CD4-positive, alpha-beta memory T cell (primary cell): ENCODE measurements at regions of chr2 and their contacts with region 1.

Region 1: GRCh38 chr2:147082850-147083522 is 761.8 kb upstream of the ACVR2A start:
- DNase-seq: peak; percentile 50 to 64 (median 57)
- H3K4me3 ChIP-seq: no peak overlapping the region
- H3K4me3 Mint-ChIP-seq: no peak overlapping the region
- H3K27ac ChIP-seq: no peak overlapping the region
- H3K27ac Mint-ChIP-seq: no peak overlapping the region
- H3K4me1 ChIP-seq: no peaks in the 10 kb centered on the region
- H3K4me1 Mint-ChIP-seq: peaks cover 0 to 4% (median under 1%) of the 10 kb centered on the region in 4 donors
- H3K27me3 ChIP-seq: no peaks in the 10 kb centered on the region
- H3K27me3 Mint-ChIP-seq: no peaks in the 10 kb centered on the region

Region 2: DNA sequence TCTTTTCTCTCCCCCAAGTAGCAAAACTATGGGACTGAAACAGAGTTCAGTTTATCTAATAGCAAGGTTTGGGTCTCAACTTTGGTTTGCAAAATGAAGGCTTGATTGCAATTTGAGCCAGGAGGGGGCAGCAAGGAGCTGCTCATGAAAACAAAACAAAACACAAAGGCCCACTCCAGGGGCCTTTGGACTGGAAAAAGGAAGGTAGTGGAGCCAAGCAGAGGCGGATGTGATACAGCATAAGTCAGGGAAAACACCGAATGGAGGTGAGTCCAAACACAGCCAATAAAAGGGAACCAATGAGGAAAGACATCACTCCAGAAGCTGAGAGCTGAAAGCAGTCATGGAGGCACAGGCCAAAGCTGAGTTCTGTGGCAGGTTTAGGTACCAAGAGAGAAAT is 37.9 kb before region 1 on chr2:
- CTCF ChIA-PET with region 1: interaction called, 10 read pairs
- POLR2A ChIA-PET with region 1: no interaction called
- intact Hi-C with region 1: no loop called
- DNase-seq: peak; percentile 8 to 37 (median 33)
- H3K4me3 ChIP-seq: no peak overlapping the region
- H3K4me3 Mint-ChIP-seq: no peak overlapping the region
- H3K27ac ChIP-seq: no peak overlapping the region
- H3K27ac Mint-ChIP-seq: peak overlapping the region in 3 of 7 donors; percentile 4 to 85 (median 74)
- H3K4me1 ChIP-seq: no peaks in the 10 kb centered on the region
- H3K4me1 Mint-ChIP-seq: peaks cover 0 to 5% (median under 1%) of the 10 kb centered on the region in 4 donors
- H3K27me3 ChIP-seq: no peaks in the 10 kb centered on the region
- H3K27me3 Mint-ChIP-seq: no peaks in the 10 kb centered on the region

Region 3: GRCh38 chr2:147099837-147100720 is 17.1 kb after region 1 on chr2:
- CTCF ChIA-PET with region 1: interaction called, 13 read pairs
- POLR2A ChIA-PET with region 1: no interaction called
- intact Hi-C with region 1: no loop called
- DNase-seq: no peak
- H3K4me3 ChIP-seq: no peak overlapping the region
- H3K4me3 Mint-ChIP-seq: no peak overlapping the region
- H3K27ac ChIP-seq: no peak overlapping the region
- H3K27ac Mint-ChIP-seq: no peak overlapping the region
- H3K4me1 ChIP-seq: no peaks in the 10 kb centered on the region
- H3K4me1 Mint-ChIP-seq: no peaks in the 10 kb centered on the region
- H3K27me3 ChIP-seq: no peaks in the 10 kb centered on the region
- H3K27me3 Mint-ChIP-seq: peaks cover 0 to 1% of the 10 kb centered on the region in 2 donors

Region 4: GRCh38 chr2:147288131-147288530 is 205.1 kb after region 1 on chr2:
- CTCF ChIA-PET with region 1: interaction called, 5 read pairs
- POLR2A ChIA-PET with region 1: no interaction called
- intact Hi-C with region 1: loop called (anchors 1 kb)
- DNase-seq: peak; percentile 55 to 70 (median 67)
- H3K4me3 ChIP-seq: no peak overlapping the region
- H3K4me3 Mint-ChIP-seq: peak overlapping the region in 6 of 8 donors; percentile 3 to 62 (median 28)
- H3K27ac ChIP-seq: no peak overlapping the region
- H3K27ac Mint-ChIP-seq: peak overlapping the region; percentile 5 to 88 (median 44)
- H3K4me1 ChIP-seq: peaks cover 25% of the 10 kb centered on the region
- H3K4me1 Mint-ChIP-seq: peaks cover 19 to 30% (median 23%) of the 10 kb centered on the region in 4 donors
- H3K27me3 ChIP-seq: no peaks in the 10 kb centered on the region
- H3K27me3 Mint-ChIP-seq: no peaks in the 10 kb centered on the region

Region 5: DNA sequence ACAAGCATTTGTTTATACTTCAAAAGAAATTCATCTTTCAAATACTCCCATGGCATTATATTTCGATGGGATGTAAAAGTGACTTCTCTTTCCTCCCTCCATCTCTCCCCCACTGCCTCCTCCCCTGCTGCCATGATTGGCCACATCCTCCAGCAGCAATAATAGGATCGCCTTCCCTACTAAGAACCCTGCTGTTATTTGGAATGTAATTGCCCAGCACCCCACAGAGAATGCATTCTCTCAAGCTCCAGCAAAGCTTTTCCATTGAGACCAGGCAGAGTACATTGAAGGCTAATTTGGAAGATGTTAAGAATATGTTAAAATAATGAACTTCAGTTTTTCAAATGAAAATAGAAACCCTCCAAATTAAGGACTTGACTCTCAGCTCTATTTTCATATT is 386.5 kb after region 1 on chr2:
- CTCF ChIA-PET with region 1: no interaction called
- POLR2A ChIA-PET with region 1: no interaction called
- intact Hi-C with region 1: no loop called
- DNase-seq: no peak
- H3K4me3 ChIP-seq: no peak overlapping the region
- H3K4me3 Mint-ChIP-seq: no peak overlapping the region
- H3K27ac ChIP-seq: no peak overlapping the region
- H3K27ac Mint-ChIP-seq: no peak overlapping the region
- H3K4me1 ChIP-seq: no peaks in the 10 kb centered on the region
- H3K4me1 Mint-ChIP-seq: no peaks in the 10 kb centered on the region
- H3K27me3 ChIP-seq: no peaks in the 10 kb centered on the region
- H3K27me3 Mint-ChIP-seq: no peaks in the 10 kb centered on the region

Region 6: DNA sequence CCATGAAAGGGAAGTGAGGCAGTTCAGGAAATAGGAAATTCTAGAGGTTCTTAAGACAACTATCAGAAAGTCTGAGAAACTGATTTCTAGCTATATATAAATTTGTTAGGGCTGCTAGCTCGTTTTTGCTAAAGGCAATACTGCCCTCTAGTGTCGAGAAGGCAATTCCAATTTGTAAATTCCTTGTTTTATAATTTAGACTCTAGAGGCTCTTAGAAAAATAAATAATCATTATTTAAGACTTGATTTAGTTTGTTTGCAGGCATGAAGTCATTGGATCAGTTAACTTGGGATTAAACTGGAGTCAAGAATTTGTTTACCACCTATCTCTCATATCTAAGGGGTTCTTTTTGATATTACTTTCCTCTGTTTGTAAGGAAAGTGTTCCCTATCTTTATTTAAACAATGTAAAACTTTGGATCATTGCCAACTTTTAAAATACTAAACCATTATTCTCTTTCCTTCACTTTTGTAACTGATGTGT is 828.0 kb after region 1 on chr2:
- CTCF ChIA-PET with region 1: interaction called, 113 read pairs
- POLR2A ChIA-PET with region 1: interaction called, 5 read pairs
- intact Hi-C with region 1: loop called (anchors 1 kb)
- DNase-seq: peak; percentile 48 to 65 (median 57)
- H3K4me3 ChIP-seq: no peak overlapping the region
- H3K4me3 Mint-ChIP-seq: no peak overlapping the region
- H3K27ac ChIP-seq: no peak overlapping the region
- H3K27ac Mint-ChIP-seq: peak overlapping the region in 4 of 7 donors; percentile 17 to 52 (median 36)
- H3K4me1 ChIP-seq: peaks cover 12% of the 10 kb centered on the region
- H3K4me1 Mint-ChIP-seq: peaks cover 11 to 18% (median 14%) of the 10 kb centered on the region in 4 donors
- H3K27me3 ChIP-seq: no peaks in the 10 kb centered on the region
- H3K27me3 Mint-ChIP-seq: no peaks in the 10 kb centered on the region